ENCODE measurements at regions of chr6 and their contacts with region 1.

Region 1: DNA sequence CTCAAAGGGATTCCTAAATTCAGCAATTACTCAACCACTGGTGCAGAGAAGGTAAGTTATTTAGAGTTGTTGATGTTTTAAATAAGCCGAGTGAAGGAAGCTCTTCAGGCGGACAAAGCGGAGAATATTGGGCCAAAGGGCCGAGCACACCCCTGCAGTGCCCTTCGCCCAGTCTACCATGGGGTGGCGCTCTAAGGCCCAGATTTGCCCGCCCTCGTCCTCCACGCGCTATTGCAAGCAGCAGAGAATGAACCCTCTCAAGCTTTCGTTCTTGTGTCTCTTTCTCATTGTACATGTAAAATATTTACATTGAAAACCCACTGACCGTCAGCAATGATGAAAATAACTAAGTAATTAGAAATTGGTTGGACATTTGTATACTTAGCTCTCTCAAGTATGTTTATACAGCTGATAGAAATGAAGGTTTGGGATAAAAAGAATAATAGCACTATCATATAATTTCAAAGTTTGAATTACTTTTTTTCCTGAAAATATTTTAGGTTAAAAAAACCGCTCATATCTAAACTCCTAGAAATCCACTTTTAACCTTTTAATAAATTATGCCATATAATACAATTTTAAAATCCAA is 195.0 kb upstream of the CEP162 start:
- H3K4me3 ChIP-seq: no peak overlapping the region
- H3K27ac ChIP-seq: no peak overlapping the region
- H3K4me1 ChIP-seq: peaks cover 11% of the 10 kb centered on the region
- CTCF ChIP-seq: peak; percentile 54; the same call in 1 of the 2 replicates

Region 2: DNA sequence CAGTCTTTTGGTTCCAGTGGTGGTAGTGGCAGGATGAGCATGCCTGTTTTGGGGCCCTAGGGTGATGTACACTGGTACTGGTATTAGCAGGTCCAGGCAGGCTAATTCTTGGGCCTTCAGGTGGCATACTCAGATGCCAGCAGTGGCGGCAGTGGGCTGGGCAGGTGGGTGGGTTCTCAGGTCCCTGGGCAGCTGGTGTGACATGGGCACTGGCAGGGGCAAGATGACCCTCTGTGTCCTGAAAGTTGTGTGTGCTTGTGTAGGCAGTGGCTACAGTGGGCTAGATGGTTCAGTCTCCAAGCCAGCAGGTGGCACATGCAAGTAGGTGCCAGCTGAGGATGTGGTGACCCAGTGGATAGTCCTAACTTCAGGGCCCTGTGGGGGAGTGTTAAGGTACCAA is 41.8 kb before region 1 on chr6:
- CTCF ChIA-PET with region 1: no interaction called
- POLR2A ChIA-PET with region 1: no interaction called
- H3K4me3 ChIP-seq: no peak overlapping the region
- H3K27ac ChIP-seq: no peak overlapping the region
- H3K4me1 ChIP-seq: no peaks in the 10 kb centered on the region
- CTCF ChIP-seq: no peak

Region 3: DNA sequence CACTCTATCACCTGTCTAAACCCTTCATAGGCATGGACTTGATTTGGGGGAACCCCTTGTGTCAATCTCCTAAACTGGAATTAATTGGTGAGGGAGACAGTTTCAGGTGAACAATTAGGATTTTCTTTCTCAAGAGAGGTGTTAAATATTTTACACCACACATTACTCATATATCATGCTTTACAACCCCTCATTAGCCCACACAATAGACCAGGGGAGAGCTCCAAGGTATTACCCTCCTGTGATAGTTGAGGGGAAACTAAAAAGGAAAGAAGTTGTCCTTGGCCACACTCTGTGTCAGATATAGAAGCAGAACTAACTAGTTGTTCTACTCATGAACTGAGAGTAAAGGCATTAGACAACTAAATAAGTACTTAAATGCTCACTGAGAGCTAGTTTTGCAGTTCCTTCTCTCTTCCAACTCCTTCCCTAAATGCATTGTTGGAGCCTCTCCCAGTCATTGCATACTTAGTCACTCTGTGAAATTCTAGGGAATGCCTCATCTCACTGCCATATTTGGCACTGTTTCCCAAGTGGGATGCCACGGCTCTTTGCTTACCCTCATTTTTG is 11.3 kb before region 1 on chr6:
- CTCF ChIA-PET with region 1: interaction called, 22 read pairs
- POLR2A ChIA-PET with region 1: no interaction called
- H3K4me3 ChIP-seq: no peak overlapping the region
- H3K27ac ChIP-seq: no peak overlapping the region
- H3K4me1 ChIP-seq: no peaks in the 10 kb centered on the region
- CTCF ChIP-seq: no peak

Region 4: GRCh38 chr6:84568971-84569370 is 146.5 kb after region 1 on chr6:
- CTCF ChIA-PET with region 1: interaction called, 44 read pairs
- POLR2A ChIA-PET with region 1: no interaction called
- H3K4me3 ChIP-seq: no peak overlapping the region
- H3K27ac ChIP-seq: no peak overlapping the region
- H3K4me1 ChIP-seq: no peaks in the 10 kb centered on the region
- CTCF ChIP-seq: peak; percentile 33; the same call in 1 of the 2 replicates

Region 5: DNA sequence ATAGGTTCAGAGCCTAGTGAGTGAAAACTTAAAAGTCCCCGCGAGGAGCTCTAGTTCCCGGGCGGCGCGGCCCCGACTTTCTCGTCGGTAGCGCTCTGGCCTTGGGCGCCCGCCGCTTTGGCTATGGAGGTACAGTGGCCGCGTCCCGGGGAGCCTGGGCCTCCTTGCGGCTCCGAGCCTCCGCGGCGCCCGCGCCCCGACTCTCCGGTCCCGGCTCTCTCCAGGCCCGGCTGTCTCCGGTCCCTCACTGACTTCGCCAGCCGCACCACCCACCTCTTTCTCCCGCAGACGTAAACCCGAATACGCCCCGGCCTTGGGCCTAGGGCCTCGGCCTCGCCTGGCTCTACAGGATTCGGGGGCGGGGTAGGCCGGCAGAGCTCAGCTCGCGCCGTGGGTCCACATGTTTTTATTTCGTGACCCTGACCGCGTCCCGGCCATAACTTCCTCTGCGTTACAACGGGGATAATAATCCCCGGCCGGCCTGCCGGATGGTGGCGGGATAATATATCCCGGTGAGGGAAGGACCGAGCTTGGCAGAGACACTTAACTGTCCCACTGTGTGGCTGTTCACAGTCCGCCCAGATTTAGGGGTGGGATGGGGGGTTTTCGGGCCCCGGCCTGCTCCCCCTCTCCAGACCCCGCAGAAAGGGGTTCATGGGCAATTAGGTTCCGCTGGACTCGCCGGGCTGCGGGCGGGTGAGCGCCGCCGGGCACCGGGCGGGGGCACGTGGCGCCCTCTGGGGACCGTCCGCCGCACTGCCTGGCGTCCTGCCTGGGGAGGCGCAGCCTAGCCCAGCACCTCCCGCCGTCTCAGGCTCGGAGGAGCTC is 351.9 kb after region 1 on chr6:
- CTCF ChIA-PET with region 1: interaction called, 22 read pairs
- POLR2A ChIA-PET with region 1: no interaction called
- H3K4me3 ChIP-seq: peak overlapping the region; percentile 58
- H3K27ac ChIP-seq: peak overlapping the region; percentile 86
- H3K4me1 ChIP-seq: peaks cover 3% of the 10 kb centered on the region; the same call in 1 of the 2 replicates
- CTCF ChIP-seq: peak; percentile 78

Region 6: GRCh38 chr6:85126485-85127167 is 704.2 kb after region 1 on chr6:
- CTCF ChIA-PET with region 1: interaction called, 18 read pairs
- POLR2A ChIA-PET with region 1: no interaction called
- H3K4me3 ChIP-seq: no peak overlapping the region
- H3K27ac ChIP-seq: no peak overlapping the region
- H3K4me1 ChIP-seq: no peaks in the 10 kb centered on the region; the same call in 1 of the 2 replicates
- CTCF ChIP-seq: peak; percentile 96

Measured in HEK293 (cell line).